Activated CD4-positive, alpha-beta T cell treated with anti-CD3 and anti-CD28 coated beads, Interleukin-2, amount 10 ng/mL, durations not matched to agents 7 days and 5 days (primary cell): ENCODE measurements at regions of chr1 and their contacts with region 1.

Region 1: DNA sequence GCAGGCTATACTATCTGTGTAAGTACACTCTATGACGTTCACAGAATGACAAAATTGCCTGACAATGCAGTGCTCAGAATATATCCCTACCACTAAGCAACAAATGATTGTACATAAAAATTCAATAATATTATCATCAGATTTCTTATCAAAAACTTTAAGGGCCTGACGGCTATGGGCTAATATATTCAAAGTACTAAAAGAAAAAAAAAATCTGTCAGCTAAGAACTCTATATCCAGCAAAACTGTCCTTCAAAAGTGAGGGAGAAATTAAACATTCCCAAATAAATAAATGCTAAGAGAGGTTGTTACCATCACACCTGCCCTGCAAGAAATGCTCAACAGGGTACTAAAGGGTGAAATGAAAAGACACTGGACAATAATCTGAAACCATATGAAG is 127.3 kb downstream of the TM2D1 start:
- DNase-seq: no peak
- H3K4me3 Mint-ChIP-seq: no peak overlapping the region
- H3K27ac Mint-ChIP-seq: no peak overlapping the region
- H3K4me1 Mint-ChIP-seq: no peaks in the 10 kb centered on the region
- H3K27me3 Mint-ChIP-seq: peaks cover 6% of the 10 kb centered on the region

Region 2: DNA sequence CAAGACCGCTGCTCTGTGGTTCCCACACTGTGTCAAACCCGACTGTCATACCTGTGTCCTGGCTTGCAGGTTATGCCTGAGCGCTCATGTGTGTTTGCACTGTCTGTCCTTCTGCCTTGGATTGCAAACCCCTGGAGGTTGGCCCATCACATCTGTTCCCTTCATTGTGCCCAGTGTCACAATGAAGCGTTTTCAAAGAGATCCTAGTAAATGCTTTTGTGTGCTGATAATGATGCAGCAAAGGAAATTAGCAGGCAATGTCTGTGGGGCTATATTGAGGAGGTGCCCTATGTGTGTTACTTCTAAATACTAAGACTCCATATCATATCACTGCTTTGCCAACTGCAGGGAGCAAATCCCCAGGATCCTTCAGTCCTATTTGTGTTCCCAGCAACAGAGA is 939.7 kb before region 1 on chr1:
- CTCF ChIA-PET with region 1: no interaction called
- POLR2A ChIA-PET with region 1: no interaction called
- DNase-seq: no peak
- H3K4me3 Mint-ChIP-seq: no peak overlapping the region
- H3K27ac Mint-ChIP-seq: no peak overlapping the region
- H3K4me1 Mint-ChIP-seq: no peaks in the 10 kb centered on the region
- H3K27me3 Mint-ChIP-seq: no peaks in the 10 kb centered on the region

Region 3: GRCh38 chr1:61436016-61436415 is 161.6 kb before region 1 on chr1:
- CTCF ChIA-PET with region 1: no interaction called
- POLR2A ChIA-PET with region 1: no interaction called
- DNase-seq: no peak
- H3K4me3 Mint-ChIP-seq: no peak overlapping the region
- H3K27ac Mint-ChIP-seq: no peak overlapping the region
- H3K4me1 Mint-ChIP-seq: no peaks in the 10 kb centered on the region
- H3K27me3 Mint-ChIP-seq: no peaks in the 10 kb centered on the region

Region 4: GRCh38 chr1:61531716-61532115 is 65.9 kb before region 1 on chr1:
- CTCF ChIA-PET with region 1: no interaction called
- POLR2A ChIA-PET with region 1: no interaction called
- DNase-seq: no peak
- H3K4me3 Mint-ChIP-seq: no peak overlapping the region
- H3K27ac Mint-ChIP-seq: no peak overlapping the region
- H3K4me1 Mint-ChIP-seq: peaks cover 16% of the 10 kb centered on the region
- H3K27me3 Mint-ChIP-seq: peaks cover 5% of the 10 kb centered on the region

Region 5: GRCh38 chr1:61585714-61586113 is 11.9 kb before region 1 on chr1:
- CTCF ChIA-PET with region 1: interaction called, 12 read pairs
- POLR2A ChIA-PET with region 1: no interaction called
- DNase-seq: no peak
- H3K4me3 Mint-ChIP-seq: no peak overlapping the region
- H3K27ac Mint-ChIP-seq: no peak overlapping the region
- H3K4me1 Mint-ChIP-seq: no peaks in the 10 kb centered on the region
- H3K27me3 Mint-ChIP-seq: peaks cover 23% of the 10 kb centered on the region